ENCODE measurements at regions of chr14 and their contacts with region 1.

Region 1: GRCh38 chr14:53355581-53356112 is 202.5 kb upstream of the DDHD1 start:
- DNase-seq: peak; percentile 25 to 37
- H3K4me3 ChIP-seq: no peak overlapping the region
- H3K27ac ChIP-seq: no peak overlapping the region
- H3K4me1 ChIP-seq: 0 out of 2 replicates have a peak, but pooled peaks cover 5% of the 10 kb centered on the region
- H3K27me3 ChIP-seq: no peaks in the 10 kb centered on the region
- CTCF ChIP-seq: no peak

Region 2: GRCh38 chr14:53409289-53409688 is 53.6 kb after region 1 on chr14:
- CTCF ChIA-PET with region 1: no interaction called
- POLR2A ChIA-PET with region 1: no interaction called
- intact Hi-C with region 1: no loop called
- DNase-seq: peak in 1 of 2 experiments; percentile 39
- H3K4me3 ChIP-seq: no peak overlapping the region
- H3K27ac ChIP-seq: no peak overlapping the region
- H3K4me1 ChIP-seq: no peaks in the 10 kb centered on the region
- H3K27me3 ChIP-seq: no peaks in the 10 kb centered on the region
- CTCF ChIP-seq: no peak

Region 3: GRCh38 chr14:54299410-54300363 is 944.0 kb after region 1 on chr14:
- CTCF ChIA-PET with region 1: no interaction called
- POLR2A ChIA-PET with region 1: interaction called, 10 read pairs
- intact Hi-C with region 1: no loop called
- DNase-seq: no peak
- H3K4me3 ChIP-seq: no peak overlapping the region
- H3K27ac ChIP-seq: no peak overlapping the region
- H3K4me1 ChIP-seq: no peaks in the 10 kb centered on the region
- H3K27me3 ChIP-seq: no peaks in the 10 kb centered on the region
- CTCF ChIP-seq: no peak

Region 4: GRCh38 chr14:55254581-55254980 is 1898.9 kb after region 1 on chr14:
- CTCF ChIA-PET with region 1: no interaction called
- POLR2A ChIA-PET with region 1: no interaction called
- intact Hi-C with region 1: no loop called
- DNase-seq: no peak
- H3K4me3 ChIP-seq: no peak overlapping the region
- H3K27ac ChIP-seq: no peak overlapping the region
- H3K4me1 ChIP-seq: no peaks in the 10 kb centered on the region
- H3K27me3 ChIP-seq: no peaks in the 10 kb centered on the region
- CTCF ChIP-seq: no peak

Measured in PC-9 (cell line).